Activated CD8-positive, alpha-beta T cell treated with anti-CD3 and anti-CD28 coated beads, Interleukin-2, amount 10 ng/mL, durations not matched to agents 7 days and 5 days (primary cell): ENCODE measurements at regions of chr1 and their contacts with region 1.

Region 1: GRCh38 chr1:167533851-167534300 is 15.5 kb upstream of the CD247 start:
- DNase-seq: peak; percentile 74
- ATAC-seq: peak; percentile 82
- H3K4me3 Mint-ChIP-seq: no peak overlapping the region
- H3K27ac Mint-ChIP-seq: no peak overlapping the region
- H3K4me1 Mint-ChIP-seq: peaks cover 7% of the 10 kb centered on the region
- H3K27me3 Mint-ChIP-seq: peaks cover 6% of the 10 kb centered on the region

Region 2: GRCh38 chr1:167220537-167221125 is 313.2 kb before region 1 on chr1 and contains the start of gene POU2F1:
- CTCF ChIA-PET with region 1: interaction called, 12 read pairs
- POLR2A ChIA-PET with region 1: no interaction called
- DNase-seq: peak; percentile 99
- ATAC-seq: peak; percentile 87
- H3K4me3 Mint-ChIP-seq: peak within 1 kb of the TSS; percentile 91
- H3K27ac Mint-ChIP-seq: peak within 1 kb of the TSS; percentile 95
- H3K4me1 Mint-ChIP-seq: peaks cover 30% of the 10 kb centered on the region
- H3K27me3 Mint-ChIP-seq: no peaks in the 10 kb centered on the region
- total RNA-seq, gene POU2F1: 22.7 to 23.3 TPM

Region 3: GRCh38 chr1:167409183-167409582 is 124.7 kb before region 1 on chr1:
- CTCF ChIA-PET with region 1: interaction called, 43 read pairs
- POLR2A ChIA-PET with region 1: no interaction called
- DNase-seq: no peak
- ATAC-seq: peak; percentile 55
- H3K4me3 Mint-ChIP-seq: no peak overlapping the region
- H3K27ac Mint-ChIP-seq: no peak overlapping the region
- H3K4me1 Mint-ChIP-seq: no peaks in the 10 kb centered on the region
- H3K27me3 Mint-ChIP-seq: no peaks in the 10 kb centered on the region

Region 4: DNA sequence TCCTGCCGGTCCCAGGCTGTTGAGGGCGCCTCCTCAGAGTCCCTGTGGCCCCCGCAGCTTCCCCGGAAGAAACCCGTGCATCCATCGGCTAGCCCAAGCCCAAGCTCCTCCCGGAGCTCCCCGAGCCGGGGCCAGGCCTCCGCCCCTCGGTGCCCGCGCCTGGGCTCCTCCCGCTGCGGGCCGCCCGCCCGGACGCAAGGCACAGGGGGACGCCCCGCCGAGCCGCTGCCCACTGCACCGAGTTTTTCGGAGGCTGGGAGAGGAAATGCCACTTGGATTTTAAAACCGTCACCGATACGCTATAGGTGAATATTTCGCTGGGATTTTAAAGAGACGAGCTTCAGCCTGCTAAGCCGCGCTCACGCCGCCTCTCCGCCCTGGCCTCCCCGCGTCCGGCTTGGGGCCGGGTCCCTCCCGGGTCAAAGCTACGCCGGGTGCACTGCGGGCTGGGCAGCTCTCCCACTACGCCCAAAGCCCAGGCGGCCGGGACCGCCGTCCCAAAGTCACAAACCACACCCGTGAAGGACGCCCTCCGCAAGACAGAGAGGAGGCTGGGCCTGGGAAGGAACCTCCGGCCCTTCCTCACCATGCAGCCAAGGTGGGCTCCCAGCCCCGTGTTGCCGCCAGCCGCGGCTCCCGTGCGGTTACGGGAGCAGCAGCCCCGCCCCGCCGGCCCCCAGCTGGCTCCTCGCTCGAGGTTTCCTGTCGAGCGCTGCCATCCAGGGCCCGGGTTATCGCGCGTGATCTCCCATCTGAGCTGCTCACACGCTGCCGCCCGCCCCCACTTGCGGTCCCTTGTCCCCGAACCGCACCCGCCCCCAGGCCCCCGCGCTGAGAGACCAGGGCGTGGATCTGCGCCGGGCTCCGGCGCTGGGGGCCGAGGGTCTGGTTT is 78.7 kb before region 1 on chr1:
- CTCF ChIA-PET with region 1: interaction called, 18 read pairs
- POLR2A ChIA-PET with region 1: no interaction called
- DNase-seq: peak; percentile 88
- ATAC-seq: peak; percentile 70
- H3K4me3 Mint-ChIP-seq: peak overlapping the region; percentile 78
- H3K27ac Mint-ChIP-seq: peak overlapping the region; percentile 81
- H3K4me1 Mint-ChIP-seq: peaks cover 75% of the 10 kb centered on the region
- H3K27me3 Mint-ChIP-seq: no peaks in the 10 kb centered on the region

Region 5: DNA sequence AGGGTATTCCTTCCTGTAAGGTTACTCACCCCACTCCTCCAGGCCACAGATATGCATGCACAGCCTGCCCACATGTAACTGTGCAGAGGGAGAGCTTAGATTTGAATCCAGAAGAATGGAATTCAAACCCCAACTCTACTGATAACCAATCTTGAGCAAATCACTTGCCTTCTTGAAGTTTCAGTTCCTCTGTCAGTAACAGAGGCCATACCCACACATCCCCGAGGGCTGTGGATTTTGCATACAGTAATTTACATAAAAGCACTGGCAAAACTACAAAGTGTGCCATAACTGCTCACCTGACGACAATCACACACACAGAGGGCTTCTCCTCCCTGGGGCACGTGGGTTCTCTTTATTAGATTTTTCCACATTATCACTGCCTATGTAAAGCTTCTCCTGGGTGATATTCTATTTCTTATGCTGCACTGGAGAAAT is 34.2 kb before region 1 on chr1:
- CTCF ChIA-PET with region 1: interaction called, 27 read pairs
- POLR2A ChIA-PET with region 1: interaction called, 3 read pairs
- DNase-seq: peak; percentile 60
- ATAC-seq: peak; percentile 61
- H3K4me3 Mint-ChIP-seq: peak overlapping the region; percentile 66
- H3K27ac Mint-ChIP-seq: peak overlapping the region; percentile 86
- H3K4me1 Mint-ChIP-seq: peaks cover 100% of the 10 kb centered on the region
- H3K27me3 Mint-ChIP-seq: no peaks in the 10 kb centered on the region

Region 6: GRCh38 chr1:167553136-167554027 is 19.5 kb after region 1 on chr1 and contains the start of gene CREG1:
- CTCF ChIA-PET with region 1: interaction called, 17 read pairs
- POLR2A ChIA-PET with region 1: interaction called, 3 read pairs
- DNase-seq: peak; percentile 90
- ATAC-seq: peak; percentile 100
- H3K4me3 Mint-ChIP-seq: peak within 1 kb of the TSS; percentile 84
- H3K27ac Mint-ChIP-seq: peak within 1 kb of the TSS; percentile 47
- H3K4me1 Mint-ChIP-seq: peaks cover 28% of the 10 kb centered on the region
- H3K27me3 Mint-ChIP-seq: peaks cover 9% of the 10 kb centered on the region
- total RNA-seq, gene CREG1: 7.3 to 7.7 TPM

Region 7: GRCh38 chr1:167573026-167573425 is 39.1 kb after region 1 on chr1:
- CTCF ChIA-PET with region 1: no interaction called
- POLR2A ChIA-PET with region 1: no interaction called
- DNase-seq: no peak
- ATAC-seq: no peak
- H3K4me3 Mint-ChIP-seq: no peak overlapping the region
- H3K27ac Mint-ChIP-seq: no peak overlapping the region
- H3K4me1 Mint-ChIP-seq: no peaks in the 10 kb centered on the region
- H3K27me3 Mint-ChIP-seq: peaks cover 32% of the 10 kb centered on the region

Region 8: GRCh38 chr1:167669209-167670124 is 135.6 kb after region 1 on chr1:
- CTCF ChIA-PET with region 1: no interaction called
- POLR2A ChIA-PET with region 1: no interaction called
- DNase-seq: no peak
- ATAC-seq: no peak
- H3K4me3 Mint-ChIP-seq: no peak overlapping the region
- H3K27ac Mint-ChIP-seq: no peak overlapping the region
- H3K4me1 Mint-ChIP-seq: peaks cover 32% of the 10 kb centered on the region
- H3K27me3 Mint-ChIP-seq: no peaks in the 10 kb centered on the region